ENCODE measurements at regions of chr11 and their contacts with region 1.

Region 1: DNA sequence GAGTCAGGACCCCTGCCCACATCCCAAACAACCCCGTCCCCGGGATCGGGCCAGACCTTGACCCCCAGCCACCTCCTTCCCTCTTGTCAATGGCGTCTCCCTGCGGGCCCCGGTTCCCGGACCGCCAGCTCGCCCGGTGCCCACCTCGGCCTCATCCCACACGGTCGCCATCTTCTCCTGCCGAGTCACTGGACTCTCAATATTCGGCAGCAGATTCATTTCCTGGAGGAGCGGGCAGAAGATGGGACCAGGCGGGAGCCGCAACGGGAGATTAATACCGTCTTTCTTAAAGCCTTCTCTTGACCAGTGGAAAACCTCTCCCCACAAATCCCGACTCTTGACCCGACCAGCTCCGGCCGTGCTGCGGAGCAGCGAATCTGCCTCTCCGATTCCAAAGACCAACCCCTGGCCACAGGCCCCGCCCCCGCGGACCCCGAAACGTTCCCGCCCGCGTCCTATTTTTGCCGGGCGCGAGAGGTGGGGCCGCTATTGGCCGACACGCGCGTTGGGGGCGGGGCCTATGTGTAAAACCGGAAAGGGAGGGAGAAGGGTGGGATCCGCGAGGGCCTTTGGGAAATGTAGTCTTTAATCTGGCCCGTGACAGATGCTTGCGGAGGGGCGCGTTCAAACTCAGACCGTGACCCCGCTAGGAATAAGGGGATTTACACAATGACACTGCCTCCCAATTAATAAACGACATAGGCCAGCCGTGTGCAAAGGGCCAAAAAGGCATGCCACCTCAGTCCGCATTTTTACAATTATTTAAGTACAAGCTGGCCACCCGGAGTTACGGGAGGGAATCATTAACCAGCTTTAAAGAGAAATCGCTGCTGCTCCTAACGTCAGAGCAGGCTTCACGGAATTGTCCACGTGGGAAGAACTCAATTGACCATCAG is at the start of gene PSMC3:
- DNase-seq: peak; percentile 88
- ATAC-seq: peak; percentile 91
- H3K4me3 ChIP-seq: peak within 1 kb of the TSS; percentile 92 to 98
- H3K27ac ChIP-seq: peak within 1 kb of the TSS; percentile 77
- H3K4me1 ChIP-seq: peaks cover 12 to 23% of the 10 kb centered on the region in 2 experiments
- H3K27me3 ChIP-seq: no peaks in the 10 kb centered on the region
- CTCF ChIP-seq: no peak
- POLR2A ChIP-seq: peak; percentile 49
- RAD21 ChIP-seq: no peak
- total RNA-seq, gene PSMC3: 155 TPM

Region 2: GRCh38 chr11:47407746-47408590 is 18.3 kb before region 1 on chr11 and contains the start of gene SLC39A13:
- CTCF ChIA-PET with region 1: interaction called, 12 read pairs
- POLR2A ChIA-PET with region 1: no interaction called
- RAD21 ChIA-PET with region 1: no interaction called
- intact Hi-C with region 1: no loop called
- DNase-seq: peak; percentile 81
- ATAC-seq: peak; percentile 88
- H3K4me3 ChIP-seq: peak within 1 kb of the TSS; percentile 78 to 87
- H3K27ac ChIP-seq: peak within 1 kb of the TSS; percentile 98
- H3K4me1 ChIP-seq: peaks cover 19 to 22% of the 10 kb centered on the region in 2 experiments
- H3K27me3 ChIP-seq: no peaks in the 10 kb centered on the region
- CTCF ChIP-seq: peak; percentile 50 to 75 (median 74); a peak in 5 of 6 replicates
- POLR2A ChIP-seq: peak; percentile 70
- RAD21 ChIP-seq: peak; percentile 67
- total RNA-seq, gene SLC39A13: 23.9 TPM

Region 3: GRCh38 chr11:47415949-47416472 is 10.3 kb before region 1 on chr11:
- CTCF ChIA-PET with region 1: interaction called, 12 read pairs
- POLR2A ChIA-PET with region 1: interaction called, 10 read pairs
- RAD21 ChIA-PET with region 1: no interaction called
- intact Hi-C with region 1: no loop called
- DNase-seq: peak; percentile 49
- ATAC-seq: peak; percentile 70
- H3K4me3 ChIP-seq: peak overlapping the region in 1 of 2 experiments; percentile 28; a peak in 1 of 4 replicates
- H3K27ac ChIP-seq: peak overlapping the region; percentile 84
- H3K4me1 ChIP-seq: peaks cover 25 to 44% of the 10 kb centered on the region in 2 experiments
- H3K27me3 ChIP-seq: no peaks in the 10 kb centered on the region
- CTCF ChIP-seq: no peak
- POLR2A ChIP-seq: no peak
- RAD21 ChIP-seq: no peak

Region 4: DNA sequence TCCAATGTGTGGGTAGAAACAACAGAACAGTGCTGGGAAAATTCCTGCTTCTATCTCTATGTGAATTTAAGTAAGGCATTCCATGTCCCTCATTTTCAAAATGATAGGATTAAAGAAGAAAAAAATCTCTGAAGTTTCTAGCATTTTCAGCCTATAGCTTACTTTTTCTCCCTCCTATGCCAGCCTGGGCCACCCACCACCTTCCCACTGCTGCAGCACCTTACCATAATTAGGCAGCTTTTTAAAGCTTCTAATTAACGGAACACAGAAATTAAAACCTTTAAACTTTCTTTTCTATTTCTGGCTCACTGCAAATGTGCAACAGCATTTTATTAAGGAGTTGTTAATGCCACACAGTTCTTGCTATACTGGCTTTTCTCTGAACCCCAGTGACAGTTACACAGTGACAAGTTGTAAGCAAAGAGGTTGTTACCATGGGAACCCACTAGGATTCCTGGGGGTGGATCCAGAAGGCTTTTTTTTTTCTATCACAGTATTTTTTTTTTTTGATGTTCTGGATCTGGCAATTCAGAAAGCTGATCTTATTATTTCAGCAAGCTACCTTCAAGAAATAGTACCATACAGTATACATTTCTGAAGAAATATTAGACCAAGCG is 106.4 kb after region 1 on chr11:
- CTCF ChIA-PET with region 1: no interaction called
- POLR2A ChIA-PET with region 1: no interaction called
- RAD21 ChIA-PET with region 1: no interaction called
- intact Hi-C with region 1: no loop called
- DNase-seq: no peak
- ATAC-seq: no peak
- H3K4me3 ChIP-seq: no peak overlapping the region
- H3K27ac ChIP-seq: no peak overlapping the region
- H3K4me1 ChIP-seq: peaks cover 0 to 3% of the 10 kb centered on the region in 2 experiments; a peak in 1 of 4 replicates
- H3K27me3 ChIP-seq: no peaks in the 10 kb centered on the region
- CTCF ChIP-seq: no peak
- POLR2A ChIP-seq: no peak
- RAD21 ChIP-seq: no peak

Region 5: GRCh38 chr11:47552566-47553416 is 126.5 kb after region 1 on chr11 and contains the start of gene CELF1:
- CTCF ChIA-PET with region 1: no interaction called
- POLR2A ChIA-PET with region 1: no interaction called
- RAD21 ChIA-PET with region 1: no interaction called
- intact Hi-C with region 1: loop called (anchors 10 kb)
- DNase-seq: peak; percentile 63
- ATAC-seq: peak; percentile 96
- H3K4me3 ChIP-seq: peak within 1 kb of the TSS; percentile 94 to 97
- H3K27ac ChIP-seq: peak within 1 kb of the TSS; percentile 93
- H3K4me1 ChIP-seq: peaks cover 13 to 25% of the 10 kb centered on the region in 2 experiments
- H3K27me3 ChIP-seq: no peaks in the 10 kb centered on the region
- CTCF ChIP-seq: peak; percentile 26 to 78 (median 76); a peak in 5 of 6 replicates
- POLR2A ChIP-seq: no peak
- RAD21 ChIP-seq: no peak
- total RNA-seq, gene CELF1: 133 TPM

Measured in HCT116 (cell line).